Right cardiac atrium (tissue), 5 donors: ENCODE measurements at regions of chr6 and their contacts with region 1.

Region 1: GRCh38 chr6:151014404-151015100 is 149.1 kb downstream of the MTHFD1L start:
- DNase-seq: peak; percentile 47 to 83 (median 79)
- ATAC-seq: peak; percentile 78 to 79
- H3K4me3 ChIP-seq: no peak overlapping the region
- H3K27ac ChIP-seq: no peak overlapping the region
- H3K4me1 ChIP-seq: no peaks in the 10 kb centered on the region
- H3K27me3 ChIP-seq: no peaks in the 10 kb centered on the region

Region 2: GRCh38 chr6:150905769-150906506 is 108.6 kb before region 1 on chr6:
- intact Hi-C with region 1: no loop called
- DNase-seq: no peak
- ATAC-seq: peak in 1 of 2 donors; percentile 28
- H3K4me3 ChIP-seq: no peak overlapping the region
- H3K27ac ChIP-seq: no peak overlapping the region
- H3K4me1 ChIP-seq: no peaks in the 10 kb centered on the region
- H3K27me3 ChIP-seq: no peaks in the 10 kb centered on the region

Region 3: DNA sequence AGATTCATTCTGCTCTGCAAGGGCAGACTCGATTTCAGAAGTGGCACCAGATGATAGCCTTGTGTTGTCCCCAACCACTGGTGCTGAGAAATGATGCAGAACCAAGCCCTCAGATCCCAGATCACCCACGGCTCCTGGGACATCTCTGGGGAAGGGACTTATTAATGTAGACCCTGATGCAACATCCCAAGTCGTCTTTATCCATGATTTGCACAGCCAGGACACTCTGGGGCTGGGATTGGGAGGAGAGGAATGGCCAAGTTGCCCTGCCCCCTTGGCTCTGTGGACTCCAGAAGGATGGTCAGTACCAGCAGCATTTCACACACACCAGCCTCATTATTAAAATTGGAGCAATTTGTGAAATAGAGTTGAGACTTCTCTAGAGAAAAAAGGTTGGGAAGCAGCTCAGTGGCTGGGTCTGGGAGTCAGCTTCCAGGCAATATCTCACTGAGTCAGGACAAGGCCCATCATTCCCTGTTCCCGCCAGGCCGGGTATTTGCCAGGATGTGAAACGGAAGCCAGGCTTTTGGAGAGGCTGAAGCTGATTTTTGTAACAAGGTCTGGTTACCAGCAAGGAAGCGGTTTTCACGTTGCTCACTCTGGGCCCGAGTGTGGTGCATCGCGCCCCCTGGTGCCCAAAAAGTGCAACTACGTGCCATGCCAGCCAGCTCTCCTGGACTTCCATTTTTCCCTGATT is 309.4 kb after region 1 on chr6:
- intact Hi-C with region 1: loop called in 3 of 4 experiments (anchors 1 to 5 kb)
- DNase-seq: peak; percentile 84 to 93 (median 93)
- ATAC-seq: peak; percentile 90 to 94
- H3K4me3 ChIP-seq: no peak overlapping the region
- H3K27ac ChIP-seq: peak overlapping the region; percentile 54
- H3K4me1 ChIP-seq: peaks cover 5% of the 10 kb centered on the region
- H3K27me3 ChIP-seq: no peaks in the 10 kb centered on the region

Region 4: GRCh38 chr6:151330134-151330696 is 315.7 kb after region 1 on chr6:
- intact Hi-C with region 1: loop called in 2 of 4 experiments (anchors 2 to 5 kb)
- DNase-seq: no peak
- ATAC-seq: no peak
- H3K4me3 ChIP-seq: no peak overlapping the region
- H3K27ac ChIP-seq: no peak overlapping the region
- H3K4me1 ChIP-seq: peaks cover 4% of the 10 kb centered on the region
- H3K27me3 ChIP-seq: no peaks in the 10 kb centered on the region

Region 5: DNA sequence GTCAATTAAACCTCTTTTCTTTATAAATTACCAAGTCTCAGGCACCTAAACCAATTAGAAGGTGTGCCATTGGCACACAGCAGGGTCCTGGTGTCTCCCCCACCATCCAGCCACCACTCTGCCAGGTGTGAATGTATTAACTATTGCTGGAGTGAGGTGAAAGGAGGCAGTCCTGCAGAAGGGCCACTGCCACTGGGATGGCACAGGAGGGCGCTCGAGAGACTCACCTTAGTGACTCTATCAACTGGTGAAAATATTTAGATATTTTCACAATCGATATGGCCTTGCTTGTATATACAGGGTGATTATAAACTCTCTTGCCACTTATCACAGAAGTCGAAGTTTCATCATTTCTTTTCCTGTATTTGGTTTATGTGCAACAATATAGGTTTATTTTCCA is 647.4 kb after region 1 on chr6:
- intact Hi-C with region 1: no loop called
- DNase-seq: no peak
- ATAC-seq: no peak
- H3K4me3 ChIP-seq: no peak overlapping the region
- H3K27ac ChIP-seq: no peak overlapping the region
- H3K4me1 ChIP-seq: no peaks in the 10 kb centered on the region
- H3K27me3 ChIP-seq: no peaks in the 10 kb centered on the region